ENCODE measurements at regions of chr5 and their contacts with region 1.

Region 1: GRCh38 chr5:148949841-148950470 is 112.9 kb downstream of the SH3TC2 start:
- DNase-seq: no peak
- H3K4me3 ChIP-seq: no peak overlapping the region
- H3K27ac ChIP-seq: no peak overlapping the region
- H3K4me1 ChIP-seq: peaks cover 0 to 12% (median 8%) of the 10 kb centered on the region in 4 experiments; a peak in 5 of 7 replicates
- H3K27me3 ChIP-seq: no peaks in the 10 kb centered on the region
- CTCF ChIP-seq: no peak
- EP300 ChIP-seq: no peak
- POLR2A ChIP-seq: no peak
- RAD21 ChIP-seq: no peak

Region 2: GRCh38 chr5:148963664-148964063 is 13.7 kb after region 1 on chr5:
- CTCF ChIA-PET with region 1: interaction called, 13 read pairs
- POLR2A ChIA-PET with region 1: interaction called, 3 read pairs
- DNase-seq: peak in 1 of 2 experiments; percentile 0
- H3K4me3 ChIP-seq: no peak overlapping the region
- H3K27ac ChIP-seq: no peak overlapping the region
- H3K4me1 ChIP-seq: no peaks in the 10 kb centered on the region
- H3K27me3 ChIP-seq: no peaks in the 10 kb centered on the region
- CTCF ChIP-seq: no peak
- EP300 ChIP-seq: no peak
- POLR2A ChIP-seq: no peak
- RAD21 ChIP-seq: no peak